ENCODE measurements at regions of chr9 and their contacts with region 1.

Region 1: GRCh38 chr9:96478829-96479371 is 28.9 kb downstream of the HABP4 start:
- DNase-seq: peak; percentile 61
- H3K4me3 Mint-ChIP-seq: no peak overlapping the region
- H3K27ac Mint-ChIP-seq: peak overlapping the region; percentile 91
- H3K4me1 Mint-ChIP-seq: peaks cover 44% of the 10 kb centered on the region
- H3K27me3 Mint-ChIP-seq: no peaks in the 10 kb centered on the region

Region 2: GRCh38 chr9:96009690-96010472 is 469.0 kb before region 1 on chr9:
- CTCF ChIA-PET with region 1: no interaction called
- POLR2A ChIA-PET with region 1: no interaction called
- intact Hi-C with region 1: loop called (anchors 10 kb)
- DNase-seq: peak; percentile 82
- H3K4me3 Mint-ChIP-seq: no peak overlapping the region
- H3K27ac Mint-ChIP-seq: peak overlapping the region; percentile 66
- H3K4me1 Mint-ChIP-seq: peaks cover 32% of the 10 kb centered on the region
- H3K27me3 Mint-ChIP-seq: no peaks in the 10 kb centered on the region

Region 3: DNA sequence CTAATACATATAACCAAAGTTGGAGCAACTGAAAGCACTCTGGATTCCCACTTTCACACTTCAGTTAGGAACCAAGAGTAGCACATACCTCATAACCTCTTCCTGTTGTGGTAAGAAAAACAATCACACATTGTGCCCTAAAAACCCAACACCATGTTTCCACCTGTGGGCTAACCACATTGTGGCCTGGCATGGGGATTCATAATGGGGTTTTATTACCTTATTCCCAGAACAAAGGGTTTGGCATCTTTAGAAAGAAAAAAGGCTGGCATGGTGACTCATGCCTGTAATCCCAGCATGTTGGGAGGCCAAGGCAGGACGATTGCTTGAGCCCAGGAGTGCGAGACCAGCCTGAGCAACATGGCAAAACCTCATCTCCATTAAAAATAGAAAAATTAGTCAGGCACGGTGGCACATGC is 237.5 kb before region 1 on chr9:
- CTCF ChIA-PET with region 1: no interaction called
- POLR2A ChIA-PET with region 1: no interaction called
- intact Hi-C with region 1: loop called (anchors 2 kb)
- DNase-seq: peak; percentile 84
- H3K4me3 Mint-ChIP-seq: peak overlapping the region; percentile 34
- H3K27ac Mint-ChIP-seq: no peak overlapping the region
- H3K4me1 Mint-ChIP-seq: peaks cover 17% of the 10 kb centered on the region
- H3K27me3 Mint-ChIP-seq: peaks cover 69% of the 10 kb centered on the region

Region 4: DNA sequence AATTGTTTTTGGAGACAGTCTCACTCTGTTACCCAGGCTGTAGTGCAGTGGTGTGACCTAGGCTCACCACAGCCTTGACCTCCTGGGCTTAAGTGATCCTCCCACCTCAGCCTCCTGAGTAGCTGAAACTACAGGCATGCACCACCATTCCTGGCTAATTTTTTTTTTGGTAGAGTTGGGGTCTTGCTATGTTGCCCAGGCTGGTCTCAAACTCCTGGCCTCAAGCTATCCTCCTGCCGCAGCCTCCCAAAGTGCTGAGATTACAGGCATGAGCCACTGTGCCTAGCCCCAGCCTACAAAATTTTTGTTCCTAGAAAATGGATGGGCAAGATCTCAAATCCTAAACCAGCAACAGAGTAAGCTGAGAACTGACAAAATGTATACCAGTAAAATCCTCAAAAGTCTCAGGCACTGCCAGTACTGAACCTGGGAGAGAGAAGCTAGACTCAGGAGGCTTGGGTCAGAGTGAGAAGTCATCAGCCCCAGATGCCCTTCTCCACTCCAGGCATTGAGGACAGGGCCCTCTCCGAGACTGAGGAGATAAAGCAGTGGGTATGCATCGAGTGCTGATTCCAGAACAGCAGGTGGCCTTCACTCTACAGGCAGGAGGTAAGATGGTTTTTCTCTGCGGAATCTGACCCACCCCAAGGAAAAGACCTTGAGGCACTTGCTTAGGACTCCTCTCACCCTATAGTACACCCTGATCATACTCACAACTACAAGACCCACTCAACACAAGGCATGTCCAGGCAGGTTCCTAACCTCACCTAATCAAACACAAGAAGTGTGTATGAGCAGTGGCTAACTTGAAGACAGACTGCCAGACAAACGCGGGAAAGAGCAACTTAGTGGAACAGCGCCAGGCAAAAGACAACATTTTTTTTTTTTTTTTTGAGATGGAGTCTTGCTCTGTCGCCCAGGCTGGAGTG is 212.4 kb before region 1 on chr9:
- CTCF ChIA-PET with region 1: no interaction called
- POLR2A ChIA-PET with region 1: no interaction called
- intact Hi-C with region 1: no loop called
- DNase-seq: no peak
- H3K4me3 Mint-ChIP-seq: no peak overlapping the region
- H3K27ac Mint-ChIP-seq: no peak overlapping the region
- H3K4me1 Mint-ChIP-seq: no peaks in the 10 kb centered on the region
- H3K27me3 Mint-ChIP-seq: peaks cover 3% of the 10 kb centered on the region

Region 5: GRCh38 chr9:96436063-96436455 is 42.8 kb before region 1 on chr9:
- CTCF ChIA-PET with region 1: no interaction called
- POLR2A ChIA-PET with region 1: no interaction called
- intact Hi-C with region 1: no loop called
- DNase-seq: no peak
- H3K4me3 Mint-ChIP-seq: no peak overlapping the region
- H3K27ac Mint-ChIP-seq: no peak overlapping the region
- H3K4me1 Mint-ChIP-seq: no peaks in the 10 kb centered on the region
- H3K27me3 Mint-ChIP-seq: peaks cover 3% of the 10 kb centered on the region

Region 6: GRCh38 chr9:96449845-96450612 is 28.9 kb before region 1 on chr9 and contains the start of gene HABP4:
- CTCF ChIA-PET with region 1: interaction called, 3 read pairs
- POLR2A ChIA-PET with region 1: interaction called, 11 read pairs
- intact Hi-C with region 1: loop called (anchors 2 kb)
- DNase-seq: peak; percentile 97
- H3K4me3 Mint-ChIP-seq: peak within 1 kb of the TSS; percentile 89
- H3K27ac Mint-ChIP-seq: peak within 1 kb of the TSS; percentile 75
- H3K4me1 Mint-ChIP-seq: peaks cover 33% of the 10 kb centered on the region
- H3K27me3 Mint-ChIP-seq: peaks cover 8% of the 10 kb centered on the region
- total RNA-seq, gene HABP4: 17.4 to 19.0 TPM

Region 7: GRCh38 chr9:96491079-96491879 is 12.4 kb after region 1 on chr9:
- CTCF ChIA-PET with region 1: interaction called, 3 read pairs
- POLR2A ChIA-PET with region 1: interaction called, 9 read pairs
- intact Hi-C with region 1: loop called (anchors 1 kb)
- DNase-seq: peak; percentile 68
- H3K4me3 Mint-ChIP-seq: peak overlapping the region; percentile 42
- H3K27ac Mint-ChIP-seq: peak overlapping the region; percentile 80
- H3K4me1 Mint-ChIP-seq: peaks cover 13% of the 10 kb centered on the region
- H3K27me3 Mint-ChIP-seq: no peaks in the 10 kb centered on the region

Region 8: GRCh38 chr9:96777426-96777864 is 298.5 kb after region 1 on chr9:
- CTCF ChIA-PET with region 1: no interaction called
- POLR2A ChIA-PET with region 1: no interaction called
- intact Hi-C with region 1: loop called (anchors 5 kb)
- DNase-seq: no peak
- H3K4me3 Mint-ChIP-seq: peak overlapping the region; percentile 100
- H3K27ac Mint-ChIP-seq: peak overlapping the region; percentile 88
- H3K4me1 Mint-ChIP-seq: peaks cover 28% of the 10 kb centered on the region
- H3K27me3 Mint-ChIP-seq: no peaks in the 10 kb centered on the region

Measured in activated CD4-positive, alpha-beta memory T cell treated with anti-CD3 and anti-CD28 coated beads for 36 hours (primary cell).